ENCODE measurements at regions of chr3 and their contacts with region 1.

Region 1: GRCh38 chr3:88131695-88132094 is 18.1 kb upstream of the C3orf38 start:
- DNase-seq: no peak
- H3K4me3 Mint-ChIP-seq: no peak overlapping the region
- H3K27ac Mint-ChIP-seq: no peak overlapping the region
- H3K4me1 Mint-ChIP-seq: peaks cover 18% of the 10 kb centered on the region
- H3K27me3 Mint-ChIP-seq: no peaks in the 10 kb centered on the region

Region 2: DNA sequence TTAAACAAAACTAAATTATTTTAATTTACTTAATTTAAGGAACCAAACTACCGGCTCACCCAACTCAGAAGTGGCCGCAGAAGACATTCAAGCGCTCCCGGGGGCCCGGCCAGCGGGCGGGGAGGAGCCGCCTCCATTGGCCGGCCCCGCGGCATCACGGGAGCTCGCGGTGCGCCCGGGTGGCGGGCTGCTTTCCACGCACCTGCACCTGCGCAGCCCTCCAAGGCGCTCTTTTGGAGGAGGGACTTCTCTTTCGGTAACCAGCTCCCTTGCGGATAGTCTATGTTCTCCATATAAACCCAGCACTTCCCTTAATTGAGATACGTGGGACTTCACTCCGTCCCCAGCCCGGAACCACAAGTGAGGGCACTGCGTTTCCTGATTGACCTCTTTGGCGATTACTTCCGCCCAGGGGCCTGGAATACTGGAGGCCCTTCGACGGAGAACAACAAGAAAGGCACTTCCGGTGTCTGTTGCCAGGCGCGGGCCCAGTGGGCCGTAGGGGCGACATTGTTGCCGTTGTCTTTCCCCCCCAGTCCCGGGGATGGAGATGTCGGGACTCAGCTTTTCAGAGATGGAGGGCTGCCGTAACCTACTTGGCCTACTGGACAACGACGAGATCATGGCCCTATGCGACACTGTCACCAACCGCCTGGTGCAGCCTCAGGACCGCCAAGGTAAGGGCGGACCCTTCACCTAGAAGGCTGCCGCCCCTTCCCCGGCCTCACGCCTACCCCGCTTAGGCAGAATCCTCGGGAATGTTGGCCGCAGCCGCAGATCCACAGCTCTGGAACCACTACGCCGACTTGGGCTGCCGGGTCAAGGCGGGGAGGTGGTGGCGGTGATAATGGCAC is 18.0 kb after region 1 on chr3 and contains the start of gene C3orf38:
- CTCF ChIA-PET with region 1: interaction called, 3 read pairs
- POLR2A ChIA-PET with region 1: interaction called, 6 read pairs
- intact Hi-C with region 1: loop called (anchors 2 kb)
- DNase-seq: peak; percentile 84
- H3K4me3 Mint-ChIP-seq: peak within 1 kb of the TSS; percentile 96
- H3K27ac Mint-ChIP-seq: peak within 1 kb of the TSS; percentile 99
- H3K4me1 Mint-ChIP-seq: peaks cover 30% of the 10 kb centered on the region
- H3K27me3 Mint-ChIP-seq: no peaks in the 10 kb centered on the region
- total RNA-seq, gene C3orf38: 25.1 to 25.8 TPM